ENCODE measurements at regions of chr3 and their contacts with region 1.

Region 1: DNA sequence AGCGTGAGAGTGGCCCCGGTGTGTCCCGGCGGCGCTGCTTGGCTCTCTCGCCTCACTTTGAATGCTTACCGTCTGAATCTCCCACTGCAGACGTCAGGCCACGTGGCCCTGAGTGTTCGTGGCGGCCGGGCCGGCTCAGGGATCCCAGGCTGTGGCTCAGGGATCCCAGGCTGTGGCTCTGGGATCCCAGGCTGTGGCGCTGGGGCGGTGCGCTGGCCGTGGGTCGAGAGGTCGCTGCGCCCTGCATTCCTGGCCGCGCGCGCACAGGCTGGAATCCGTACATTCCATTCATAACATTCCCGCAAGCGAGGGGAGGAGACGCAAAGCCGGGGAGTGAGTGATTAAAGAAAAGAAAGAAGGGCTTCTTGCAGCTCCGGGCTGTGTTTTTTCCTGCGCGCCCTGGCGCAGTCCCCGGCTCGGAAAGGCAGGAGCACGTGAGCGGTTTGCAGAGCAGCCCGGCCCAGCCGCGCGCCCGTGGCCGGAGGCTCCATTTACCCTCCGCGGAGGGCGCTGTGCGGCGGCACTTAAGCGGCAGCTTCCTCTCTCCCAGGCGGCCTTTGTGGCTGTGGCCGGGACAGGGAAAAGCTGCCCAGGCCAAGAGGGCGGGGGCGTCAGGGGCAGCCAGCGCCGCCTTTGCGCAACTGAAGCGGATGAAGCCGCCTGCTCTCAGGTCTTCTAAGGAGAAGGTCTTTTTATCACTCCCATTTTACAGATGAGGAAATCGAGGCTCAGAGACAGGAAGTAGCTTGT is 87.0 kb upstream of the ALDH1L1 start:
- DNase-seq: peak; percentile 74 to 83 (median 80)
- ATAC-seq: peak; percentile 55
- H3K4me3 ChIP-seq: no peak overlapping the region
- H3K27ac ChIP-seq: peak overlapping the region; percentile 83 to 93 (median 92)
- H3K4me1 ChIP-seq: peaks cover 62% of the 10 kb centered on the region
- H3K27me3 ChIP-seq: no peaks in the 10 kb centered on the region
- CTCF ChIP-seq: peak in 3 of 7 experiments; percentile 16 to 27 (median 24)
- POLR2A ChIP-seq: peak; percentile 42 to 70 (median 66)

Region 2: GRCh38 chr3:126146525-126147146 is 120.8 kb before region 1 on chr3:
- intact Hi-C with region 1: no loop called
- DNase-seq: peak in 2 of 4 donors; percentile 1 to 10
- ATAC-seq: no peak
- H3K4me3 ChIP-seq: no peak overlapping the region
- H3K27ac ChIP-seq: no peak overlapping the region
- H3K4me1 ChIP-seq: no peaks in the 10 kb centered on the region
- H3K27me3 ChIP-seq: no peaks in the 10 kb centered on the region
- CTCF ChIP-seq: no peak
- POLR2A ChIP-seq: no peak

Region 3: GRCh38 chr3:126314790-126315658 is 47.6 kb after region 1 on chr3:
- intact Hi-C with region 1: no loop called
- DNase-seq: no peak
- ATAC-seq: no peak
- H3K4me3 ChIP-seq: no peak overlapping the region
- H3K27ac ChIP-seq: no peak overlapping the region
- H3K4me1 ChIP-seq: no peaks in the 10 kb centered on the region
- H3K27me3 ChIP-seq: no peaks in the 10 kb centered on the region
- CTCF ChIP-seq: no peak
- POLR2A ChIP-seq: no peak

Region 4: DNA sequence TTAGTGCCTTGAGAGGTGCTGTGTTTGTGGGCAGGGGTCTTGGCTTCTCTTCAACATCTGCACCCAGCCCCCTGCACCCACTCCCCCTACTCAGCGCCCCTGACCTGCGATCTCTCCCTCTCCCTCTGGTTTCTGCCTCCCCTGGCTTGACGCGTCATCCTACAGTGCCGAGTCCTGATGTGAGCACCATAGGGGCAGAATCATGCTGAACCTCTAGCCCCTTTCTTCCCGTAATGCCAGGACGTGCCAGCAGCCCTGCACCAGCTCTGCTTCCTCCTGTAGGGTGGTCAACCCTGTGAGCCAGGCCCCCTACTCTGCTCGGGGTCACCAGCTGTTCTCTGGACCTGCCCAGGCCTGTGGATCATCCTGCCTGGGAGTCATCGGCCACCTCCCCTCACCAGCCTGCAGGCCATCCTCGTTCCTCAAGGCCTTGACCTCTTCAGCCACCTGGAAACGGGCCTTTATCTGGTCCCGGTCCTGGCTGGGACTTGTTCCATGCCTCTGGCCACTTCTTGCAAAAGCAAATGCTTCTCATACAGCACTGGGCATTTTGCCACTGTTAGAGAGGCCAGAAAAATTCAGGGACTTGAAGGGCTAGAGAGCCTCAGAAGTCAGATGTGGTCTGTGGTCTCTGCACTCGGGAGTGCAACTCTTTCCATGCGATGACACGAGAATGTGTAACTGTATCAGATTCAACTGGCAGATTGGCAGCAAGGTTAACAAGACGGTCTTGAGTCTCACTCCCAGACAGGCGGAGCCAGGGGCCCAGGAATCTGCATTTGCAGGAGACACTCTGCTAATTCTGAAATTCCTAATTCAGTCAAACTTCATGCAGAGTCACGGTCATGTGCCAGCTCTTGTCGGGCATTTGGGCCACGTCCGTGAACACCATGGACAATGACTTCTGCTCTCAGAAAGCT is 106.5 kb after region 1 on chr3:
- intact Hi-C with region 1: loop called (anchors 10 kb)
- DNase-seq: no peak
- ATAC-seq: no peak
- H3K4me3 ChIP-seq: no peak overlapping the region
- H3K27ac ChIP-seq: no peak overlapping the region
- H3K4me1 ChIP-seq: no peaks in the 10 kb centered on the region
- H3K27me3 ChIP-seq: no peaks in the 10 kb centered on the region
- CTCF ChIP-seq: no peak
- POLR2A ChIP-seq: no peak

Measured in body of pancreas (tissue), 4 donors.